ENCODE measurements at regions of chrX and their contacts with region 1.

Region 1: DNA sequence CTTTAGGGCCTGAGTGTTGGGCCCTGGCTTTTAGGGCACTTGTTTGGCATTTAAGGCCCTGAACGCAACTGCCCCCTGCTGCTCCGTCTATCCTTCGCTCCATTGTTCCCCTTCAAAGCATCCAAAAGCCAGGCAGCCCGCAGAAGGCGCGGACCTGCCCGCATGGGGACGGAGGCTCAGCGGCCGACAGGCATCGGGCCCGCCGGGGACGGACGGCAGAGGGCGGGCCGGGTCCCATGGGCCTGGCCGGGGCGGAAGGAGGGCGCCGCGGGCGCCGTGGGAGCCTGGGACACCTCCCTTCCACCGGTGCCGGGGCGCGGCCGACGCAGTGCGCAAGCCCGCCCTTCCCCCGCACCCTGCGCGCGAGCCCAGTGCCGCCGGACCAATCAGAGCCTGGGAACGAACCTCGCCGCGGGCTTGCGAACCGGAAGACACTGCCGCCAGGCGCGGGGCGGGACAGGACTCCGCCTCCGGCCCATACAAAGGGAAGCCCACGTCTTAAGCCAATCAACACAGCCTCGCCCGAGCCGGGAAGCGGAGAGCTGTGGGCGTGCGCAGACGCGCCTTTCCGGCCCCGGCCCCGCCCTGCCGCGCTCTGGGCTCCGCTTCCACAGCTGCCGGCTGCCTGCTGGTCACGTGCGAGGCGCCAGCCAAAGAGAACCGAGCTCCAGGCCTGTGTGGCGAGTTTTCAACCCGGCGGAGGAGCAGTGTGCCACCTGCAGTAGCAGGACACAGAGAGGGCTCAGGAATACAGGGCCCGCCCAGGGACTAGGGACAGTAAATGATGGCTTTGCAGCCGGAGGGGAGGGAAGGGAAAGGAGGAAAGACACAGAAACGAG is 2.1 kb upstream of the ARHGAP4 start:
- DNase-seq: peak; percentile 99
- H3K4me3 ChIP-seq: peak overlapping the region; percentile 58
- H3K27ac ChIP-seq: peak overlapping the region; percentile 94
- H3K4me1 ChIP-seq: peaks cover 20% of the 10 kb centered on the region
- H3K27me3 ChIP-seq: no peaks in the 10 kb centered on the region
- CTCF ChIP-seq: no peak

Region 2: DNA sequence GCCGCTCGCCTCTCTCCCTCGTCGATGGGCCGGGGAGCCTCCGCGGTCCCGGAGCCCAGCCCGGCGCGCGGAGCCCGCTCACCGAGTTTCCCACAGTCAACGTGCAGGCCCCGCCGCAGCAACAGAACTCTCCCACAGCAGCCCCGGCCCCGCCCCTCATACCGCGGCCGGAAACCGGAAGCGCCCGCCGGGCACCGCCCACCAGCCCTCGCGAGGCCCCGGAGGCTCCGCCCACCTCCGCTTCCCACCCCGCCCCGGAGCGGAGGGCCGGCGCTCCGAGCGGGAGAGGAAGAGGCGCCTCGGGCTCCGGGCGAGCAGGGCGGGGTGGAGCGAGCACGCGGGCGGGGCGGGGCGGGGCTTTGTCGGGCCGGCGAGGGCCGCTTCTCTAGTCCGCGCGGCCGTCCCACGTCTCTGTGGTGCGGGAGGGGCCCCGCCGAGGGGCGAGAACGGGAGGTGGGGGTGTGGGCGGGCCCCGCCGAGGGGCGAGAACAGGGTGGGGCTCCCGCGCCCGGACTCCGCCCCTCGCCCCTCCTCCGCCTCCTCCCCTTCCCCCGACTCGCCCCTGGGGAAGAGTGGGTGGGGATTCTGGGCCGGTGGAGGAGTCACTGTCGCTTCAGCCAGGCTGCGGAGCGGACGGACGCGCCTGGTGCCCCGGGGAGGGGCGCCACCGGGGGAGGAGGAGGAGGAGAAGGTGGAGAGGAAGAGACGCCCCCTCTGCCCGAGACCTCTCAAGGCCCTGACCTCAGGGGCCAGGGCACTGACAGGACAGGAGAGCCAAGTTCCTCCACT is 203.7 kb before region 1 on chrX and contains the starts of genes ABCD1 and BCAP31:
- CTCF ChIA-PET with region 1: no interaction called
- POLR2A ChIA-PET with region 1: no interaction called
- intact Hi-C with region 1: no loop called
- DNase-seq: peak; percentile 92
- H3K4me3 ChIP-seq: peak within 1 kb of the TSS; percentile 71
- H3K27ac ChIP-seq: peak within 1 kb of the TSS; percentile 81
- H3K4me1 ChIP-seq: peaks cover 8% of the 10 kb centered on the region
- H3K27me3 ChIP-seq: no peaks in the 10 kb centered on the region
- CTCF ChIP-seq: no peak
- total RNA-seq, gene ABCD1: 7.8 and 8.0 TPM in 2 replicates
- total RNA-seq, gene BCAP31: 219 and 235 TPM in 2 replicates

Region 3: DNA sequence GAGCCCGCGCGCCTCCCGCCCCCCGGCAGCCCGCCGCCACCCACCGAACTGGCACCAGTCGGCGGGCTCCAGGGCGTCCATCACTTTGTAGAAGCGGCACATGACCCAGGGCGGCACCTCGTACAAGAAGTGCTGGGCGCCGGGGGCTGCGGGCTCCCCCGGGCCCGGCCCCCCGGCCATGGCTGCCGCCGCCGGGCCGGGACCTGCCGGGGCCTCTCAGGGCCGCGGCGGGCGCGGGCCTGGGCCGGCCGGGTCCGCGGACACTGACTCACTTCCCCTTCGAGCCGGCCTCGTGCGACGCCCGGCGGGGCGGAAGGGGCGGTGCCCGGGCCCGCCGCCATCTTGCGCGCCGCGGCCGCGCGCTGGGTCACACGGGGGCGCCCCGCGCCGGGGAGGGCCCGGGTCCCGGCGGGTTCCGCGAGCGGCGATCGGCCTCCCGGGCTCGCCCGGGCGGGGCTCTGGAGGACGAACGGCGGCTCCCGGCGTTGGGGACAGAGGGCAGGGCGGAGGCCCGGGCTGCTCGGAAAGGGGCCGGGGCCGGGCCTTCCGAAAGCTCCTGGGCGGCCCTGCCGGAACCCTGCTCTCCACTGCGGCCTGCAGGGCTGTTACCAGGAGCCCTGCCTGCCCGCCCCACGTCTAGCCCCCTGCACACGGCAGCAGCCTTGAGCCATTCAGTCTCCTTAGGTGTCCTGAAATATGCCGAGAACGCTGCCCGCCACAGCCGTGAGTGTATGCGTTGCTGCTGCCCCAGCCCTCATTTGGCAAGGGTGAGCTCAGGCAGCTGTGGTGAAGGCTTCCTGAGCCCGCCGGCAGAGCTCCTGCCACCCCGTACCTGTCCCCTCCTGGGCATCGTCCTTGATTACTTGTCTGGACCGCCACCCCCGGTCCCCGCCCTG is 91.7 kb after region 1 on chrX and contains the start of gene IRAK1:
- CTCF ChIA-PET with region 1: no interaction called
- POLR2A ChIA-PET with region 1: no interaction called
- intact Hi-C with region 1: no loop called
- DNase-seq: peak; percentile 47
- H3K4me3 ChIP-seq: peak within 1 kb of the TSS; percentile 53
- H3K27ac ChIP-seq: peak within 1 kb of the TSS; percentile 82
- H3K4me1 ChIP-seq: no peaks in the 10 kb centered on the region
- H3K27me3 ChIP-seq: peaks cover 19% of the 10 kb centered on the region
- CTCF ChIP-seq: no peak
- total RNA-seq, gene IRAK1: 118 and 147 TPM in 2 replicates

Region 4: DNA sequence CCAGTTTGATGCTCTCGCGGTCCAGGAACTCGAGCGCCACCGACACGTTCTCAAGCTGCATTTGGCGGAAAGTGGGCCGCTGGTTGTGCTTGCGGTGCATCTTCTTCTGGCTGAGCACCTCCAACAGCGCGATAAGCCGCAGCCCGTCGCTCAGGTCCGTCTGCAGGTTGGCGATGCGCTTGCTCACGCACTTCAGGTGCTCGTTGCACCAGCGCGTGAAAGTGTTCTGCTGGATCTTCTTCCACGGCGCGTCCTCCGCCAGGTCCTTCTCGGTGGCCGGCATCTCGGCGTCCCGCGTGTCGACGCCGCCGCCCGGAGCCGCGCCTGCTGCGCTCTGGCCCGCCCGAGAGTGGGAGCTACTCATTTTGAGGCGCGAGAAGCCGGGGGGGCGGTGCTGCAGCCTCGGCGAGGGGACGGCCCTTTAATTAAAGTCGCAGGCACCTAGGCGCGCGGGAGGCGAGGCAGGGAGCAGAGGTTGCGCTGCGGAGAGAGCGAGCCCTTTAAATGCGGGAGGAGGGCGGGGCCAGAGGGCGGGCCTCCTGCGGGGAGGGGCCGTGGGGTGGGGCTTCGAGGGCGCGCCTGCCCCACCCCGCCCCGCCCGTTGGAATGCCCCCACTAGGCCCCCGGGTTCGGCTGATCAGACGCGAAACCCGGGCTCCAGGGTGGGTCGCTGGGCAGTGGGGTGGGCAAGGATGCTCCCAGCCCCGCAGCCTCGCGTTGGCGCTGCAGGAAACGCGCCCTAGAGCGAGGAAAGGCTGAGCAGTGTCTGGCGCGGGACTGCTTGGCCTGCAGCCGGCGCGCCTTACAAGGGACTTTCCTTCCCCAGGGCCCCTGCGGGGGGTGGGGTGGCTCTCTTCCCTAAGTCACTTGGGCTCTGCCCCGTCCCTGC is 443.0 kb after region 1 on chrX:
- CTCF ChIA-PET with region 1: interaction called, 3 read pairs
- POLR2A ChIA-PET with region 1: interaction called, 13 read pairs
- intact Hi-C with region 1: no loop called
- DNase-seq: peak; percentile 97
- H3K4me3 ChIP-seq: peak overlapping the region; percentile 81
- H3K27ac ChIP-seq: peak overlapping the region; percentile 96
- H3K4me1 ChIP-seq: peaks cover 21% of the 10 kb centered on the region
- H3K27me3 ChIP-seq: no peaks in the 10 kb centered on the region
- CTCF ChIP-seq: no peak

Measured in A673 (cell line).